Activated naive CD4-positive, alpha-beta T cell treated with anti-CD3 and anti-CD28 coated beads for 36 hours (primary cell): ENCODE measurements at regions of chr3 and their contacts with region 1.

Region 1: GRCh38 chr3:179147873-179148615 is at the start of gene PIK3CA:
- DNase-seq: peak; percentile 95
- H3K4me3 Mint-ChIP-seq: peak within 1 kb of the TSS; percentile 94
- H3K27ac Mint-ChIP-seq: peak within 1 kb of the TSS; percentile 96
- H3K4me1 Mint-ChIP-seq: peaks cover 36% of the 10 kb centered on the region
- H3K27me3 Mint-ChIP-seq: no peaks in the 10 kb centered on the region
- total RNA-seq, gene PIK3CA: 15.8 to 15.9 TPM

Region 2: DNA sequence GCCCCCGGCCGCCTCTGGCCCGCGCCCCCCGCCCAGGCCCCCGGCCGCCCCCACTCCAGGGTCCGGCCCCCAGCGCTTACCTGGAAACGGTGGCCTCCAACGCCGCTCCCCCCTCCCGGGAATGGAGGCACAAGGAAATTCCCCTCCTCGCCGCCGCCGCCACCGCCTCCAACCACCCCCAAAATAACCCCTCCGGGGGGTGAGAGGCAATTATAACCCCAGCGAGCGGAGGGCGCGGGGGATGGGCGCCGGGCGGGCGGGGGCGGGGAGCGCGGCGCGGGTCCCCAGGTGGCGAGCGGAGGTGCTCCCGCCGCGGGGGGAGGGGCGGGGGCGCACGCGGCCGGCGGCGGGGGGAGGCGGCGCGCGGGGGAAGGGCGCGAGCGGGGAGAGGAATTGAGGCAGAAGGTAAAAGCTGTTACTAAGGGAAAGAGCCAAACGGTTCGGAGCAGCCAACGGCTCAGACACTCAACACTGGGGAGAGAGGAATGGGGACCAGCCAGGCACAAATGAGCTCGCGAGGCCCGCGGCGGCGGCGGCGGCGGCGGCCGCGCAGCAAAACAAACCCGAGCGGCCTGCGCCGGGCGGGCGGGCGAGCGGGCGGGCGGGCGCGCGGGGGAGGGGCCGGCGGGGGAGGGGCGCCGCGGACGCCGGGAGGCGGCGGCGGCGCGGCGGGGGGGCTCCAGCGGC is 1950.9 kb before region 1 on chr3 and contains the start of gene TBL1XR1:
- CTCF ChIA-PET with region 1: no interaction called
- intact Hi-C with region 1: loop called (anchors 2 kb)
- DNase-seq: peak; percentile 84
- H3K4me3 Mint-ChIP-seq: peak within 1 kb of the TSS; percentile 96
- H3K27ac Mint-ChIP-seq: peak within 1 kb of the TSS; percentile 99
- H3K4me1 Mint-ChIP-seq: peaks cover 62% of the 10 kb centered on the region
- H3K27me3 Mint-ChIP-seq: no peaks in the 10 kb centered on the region
- total RNA-seq, gene TBL1XR1: 149 to 162 TPM

Region 3: DNA sequence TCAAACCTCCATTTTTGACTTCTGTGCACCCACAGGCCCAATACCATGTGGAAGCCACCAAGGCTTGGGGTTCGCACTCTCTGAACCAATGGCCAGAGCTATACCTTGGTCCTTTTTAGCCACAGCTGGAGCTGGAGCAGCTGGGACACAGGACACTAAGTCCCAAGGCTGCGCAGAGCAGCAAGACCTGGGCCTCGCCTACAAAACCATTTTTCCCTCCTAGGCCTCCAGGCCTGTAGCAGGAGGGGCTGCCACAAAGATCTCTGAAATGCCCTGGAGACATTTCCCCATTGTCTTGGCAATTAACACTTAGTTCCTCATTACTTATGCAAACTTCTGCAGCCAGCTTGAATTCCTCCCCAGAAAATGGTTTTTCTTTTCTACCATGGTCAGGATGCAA is 157.8 kb before region 1 on chr3:
- CTCF ChIA-PET with region 1: no interaction called
- intact Hi-C with region 1: no loop called
- DNase-seq: no peak
- H3K4me3 Mint-ChIP-seq: no peak overlapping the region
- H3K27ac Mint-ChIP-seq: no peak overlapping the region
- H3K4me1 Mint-ChIP-seq: no peaks in the 10 kb centered on the region
- H3K27me3 Mint-ChIP-seq: no peaks in the 10 kb centered on the region

Region 4: GRCh38 chr3:179015551-179016020 is 132.5 kb before region 1 on chr3:
- CTCF ChIA-PET with region 1: interaction called, 5 read pairs
- intact Hi-C with region 1: loop called (anchors 1 kb)
- DNase-seq: peak; percentile 81
- H3K4me3 Mint-ChIP-seq: no peak overlapping the region
- H3K27ac Mint-ChIP-seq: no peak overlapping the region
- H3K4me1 Mint-ChIP-seq: peaks cover 35% of the 10 kb centered on the region
- H3K27me3 Mint-ChIP-seq: no peaks in the 10 kb centered on the region

Region 5: DNA sequence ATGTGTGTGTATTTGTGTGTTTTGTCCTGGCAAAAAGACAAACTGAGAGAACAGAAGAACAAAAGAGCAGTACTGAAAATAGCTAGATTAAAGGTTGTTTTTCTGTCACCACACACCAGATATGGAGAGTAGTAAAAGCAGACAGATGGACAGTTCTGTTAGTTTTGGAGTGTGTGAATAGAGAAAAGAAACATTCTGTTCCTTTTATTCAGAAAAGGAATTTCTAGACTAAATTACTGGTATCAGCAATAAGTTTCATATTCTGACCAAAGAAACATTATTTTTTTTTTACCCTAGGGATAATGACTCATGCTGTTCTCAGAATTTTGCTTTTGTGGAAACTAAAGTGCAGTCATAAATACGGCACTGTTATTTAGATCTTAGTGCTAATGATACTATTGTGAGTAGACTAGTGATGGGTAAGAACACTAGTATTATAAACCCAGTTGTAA is 33.0 kb after region 1 on chr3:
- CTCF ChIA-PET with region 1: interaction called, 6 read pairs
- intact Hi-C with region 1: loop called (anchors 1 kb)
- DNase-seq: no peak
- H3K4me3 Mint-ChIP-seq: no peak overlapping the region
- H3K27ac Mint-ChIP-seq: no peak overlapping the region
- H3K4me1 Mint-ChIP-seq: peaks cover 47% of the 10 kb centered on the region
- H3K27me3 Mint-ChIP-seq: no peaks in the 10 kb centered on the region

Region 6: DNA sequence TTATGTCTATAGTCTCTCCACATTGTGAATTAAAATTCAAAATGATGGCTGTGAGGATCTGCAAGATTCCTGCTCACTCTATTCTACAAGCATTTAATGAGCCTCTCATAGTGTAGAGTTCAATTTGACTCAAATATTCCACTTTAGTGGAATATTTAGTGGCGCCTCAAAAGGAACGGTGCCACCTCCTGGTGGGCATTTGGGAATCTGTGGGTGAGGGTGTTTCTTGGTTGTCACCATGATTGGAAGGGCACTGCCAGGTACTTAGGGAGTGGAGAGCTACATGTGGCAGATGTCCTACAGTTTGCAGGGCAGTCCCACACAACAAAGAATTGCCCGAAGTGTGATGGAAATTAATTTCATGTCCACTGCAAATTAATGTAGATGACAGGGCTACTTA is 124.3 kb after region 1 on chr3:
- CTCF ChIA-PET with region 1: interaction called, 5 read pairs
- intact Hi-C with region 1: loop called (anchors 1 kb)
- DNase-seq: peak; percentile 23
- H3K4me3 Mint-ChIP-seq: no peak overlapping the region
- H3K27ac Mint-ChIP-seq: no peak overlapping the region
- H3K4me1 Mint-ChIP-seq: no peaks in the 10 kb centered on the region
- H3K27me3 Mint-ChIP-seq: peaks cover 6% of the 10 kb centered on the region

Region 7: DNA sequence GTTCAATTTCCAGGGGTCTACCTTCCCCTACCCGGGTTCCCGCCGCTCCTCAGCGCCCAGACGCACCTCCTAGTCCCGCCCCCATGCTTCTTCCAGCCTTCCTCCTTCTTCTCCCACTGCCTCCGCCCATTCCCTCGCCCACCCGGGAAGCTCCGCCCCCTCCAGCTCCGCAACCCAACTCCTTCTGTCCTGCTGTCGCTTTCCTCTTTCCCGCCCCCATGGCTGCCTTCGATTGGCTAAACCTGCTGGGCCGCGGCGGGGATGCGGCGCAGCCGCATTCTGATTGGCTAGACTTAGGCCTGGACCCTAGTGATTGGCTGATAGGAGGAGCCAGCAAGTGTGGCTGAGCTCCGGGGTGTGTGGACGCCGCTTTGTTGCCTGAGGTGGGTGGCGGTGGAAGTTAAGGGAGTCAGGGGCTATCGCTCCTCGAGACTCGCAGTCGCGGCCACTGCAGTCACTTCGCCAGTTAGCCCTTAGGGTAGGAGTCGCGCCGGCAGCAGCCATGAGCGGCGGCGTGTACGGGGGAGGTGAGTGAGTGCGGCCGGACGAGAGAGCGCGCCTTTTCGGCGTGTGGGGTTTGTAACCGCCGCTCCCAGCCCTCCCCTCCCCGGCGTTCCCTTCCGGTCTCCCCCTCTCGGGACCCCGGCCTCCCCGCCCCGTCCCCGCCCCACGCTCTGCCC is 414.7 kb after region 1 on chr3 and contains the start of gene ACTL6A:
- CTCF ChIA-PET with region 1: no interaction called
- intact Hi-C with region 1: loop called (anchors 1 kb)
- DNase-seq: peak; percentile 99
- H3K4me3 Mint-ChIP-seq: peak within 1 kb of the TSS; percentile 97
- H3K27ac Mint-ChIP-seq: peak within 1 kb of the TSS; percentile 96
- H3K4me1 Mint-ChIP-seq: peaks cover 28% of the 10 kb centered on the region
- H3K27me3 Mint-ChIP-seq: peaks cover 2% of the 10 kb centered on the region
- total RNA-seq, gene ACTL6A: 89.2 to 90.0 TPM

Region 8: DNA sequence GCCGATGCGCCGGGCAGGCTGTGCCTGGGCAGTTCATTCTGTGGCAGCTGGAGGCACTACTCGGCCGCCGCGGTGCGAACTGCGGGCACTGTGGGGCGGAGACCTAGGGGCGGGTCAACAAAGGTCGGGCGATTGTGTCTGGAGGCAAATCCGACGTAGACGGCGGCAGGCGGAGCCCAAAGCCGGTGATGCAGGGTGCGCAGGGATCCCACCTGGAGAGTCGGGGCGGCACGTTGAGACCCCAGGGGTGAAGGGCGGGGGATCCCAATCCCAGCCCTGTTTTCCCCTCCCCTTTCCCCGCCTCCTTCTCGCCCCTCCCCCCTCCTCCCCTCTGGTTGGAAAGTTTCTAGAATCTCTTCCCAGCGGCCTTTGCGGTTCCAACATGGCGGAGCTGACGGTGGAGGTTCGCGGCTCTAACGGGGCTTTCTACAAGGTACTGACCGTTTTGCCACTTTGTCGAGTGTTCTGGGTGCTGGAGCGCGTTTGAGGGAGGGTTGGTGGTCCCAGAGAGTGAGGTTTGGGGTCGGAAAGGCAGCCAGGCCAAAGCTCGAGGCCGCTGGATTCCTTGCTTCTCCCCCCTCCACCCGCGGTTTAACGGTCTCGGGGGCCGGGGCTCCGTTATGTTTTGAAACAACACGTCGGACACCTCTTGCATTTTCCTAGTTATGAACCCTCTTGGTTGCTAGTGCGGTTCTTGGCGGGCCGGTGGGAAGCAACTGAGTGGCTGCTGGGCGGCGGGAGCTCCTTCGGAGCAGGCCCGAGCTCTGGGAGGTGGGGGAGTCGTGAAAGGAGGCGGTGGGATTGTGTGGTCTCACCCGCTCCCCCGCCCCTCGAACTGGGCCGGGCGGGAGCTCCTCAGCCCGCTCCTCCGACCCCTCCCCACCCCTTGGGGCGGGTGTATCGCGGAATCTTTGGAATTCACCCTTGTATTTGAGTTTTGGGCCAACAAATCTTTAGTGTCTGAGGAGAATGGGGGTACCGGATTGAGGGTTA is 1764.6 kb after region 1 on chr3 and contains the start of gene FXR1:
- CTCF ChIA-PET with region 1: no interaction called
- intact Hi-C with region 1: loop called (anchors 1 kb)
- DNase-seq: peak; percentile 96
- H3K4me3 Mint-ChIP-seq: peak within 1 kb of the TSS; percentile 93
- H3K27ac Mint-ChIP-seq: peak within 1 kb of the TSS; percentile 98
- H3K4me1 Mint-ChIP-seq: peaks cover 57% of the 10 kb centered on the region
- H3K27me3 Mint-ChIP-seq: no peaks in the 10 kb centered on the region
- total RNA-seq, gene FXR1: 184 to 194 TPM